AG04449 (cell line): ENCODE measurements at regions of chr10 and their contacts with region 1.

Region 1: GRCh38 chr10:114470956-114471905 is 66.9 kb upstream of the AFAP1L2 start:
- DNase-seq: peak; percentile 9
- H3K4me3 ChIP-seq: no peak overlapping the region
- CTCF ChIP-seq: peak; percentile 81

Region 2: DNA sequence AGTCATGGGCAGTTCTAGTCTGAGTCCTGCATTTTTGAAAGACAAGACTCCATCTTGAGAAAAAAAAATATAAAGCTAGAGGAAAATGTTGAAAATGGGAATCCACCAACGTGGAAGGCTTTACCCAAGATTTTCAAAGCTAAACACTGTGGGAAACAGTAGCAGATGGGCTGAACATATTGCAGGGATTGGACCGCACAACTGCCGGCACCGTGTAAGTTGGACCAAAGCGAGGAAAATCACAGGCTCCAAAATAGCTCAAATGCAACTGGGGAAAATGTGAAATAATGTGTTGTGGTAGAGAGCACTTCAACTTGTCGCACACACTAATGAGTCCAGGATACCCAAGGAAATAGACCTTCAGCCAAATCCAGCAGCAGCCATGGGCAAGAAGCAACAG is 454.0 kb before region 1 on chr10:
- CTCF ChIA-PET with region 1: no interaction called
- POLR2A ChIA-PET with region 1: no interaction called
- DNase-seq: no peak
- H3K4me3 ChIP-seq: no peak overlapping the region
- CTCF ChIP-seq: no peak

Region 3: GRCh38 chr10:114320249-114321116 is 150.7 kb before region 1 on chr10:
- CTCF ChIA-PET with region 1: no interaction called
- POLR2A ChIA-PET with region 1: no interaction called
- DNase-seq: no peak
- H3K4me3 ChIP-seq: no peak overlapping the region
- CTCF ChIP-seq: no peak

Region 4: GRCh38 chr10:114458955-114459354 is 12.3 kb before region 1 on chr10:
- CTCF ChIA-PET with region 1: interaction called, 41 read pairs
- POLR2A ChIA-PET with region 1: no interaction called
- DNase-seq: no peak
- H3K4me3 ChIP-seq: no peak overlapping the region
- CTCF ChIP-seq: no peak

Region 5: GRCh38 chr10:114486938-114487814 is 15.9 kb after region 1 on chr10:
- CTCF ChIA-PET with region 1: interaction called, 41 read pairs
- POLR2A ChIA-PET with region 1: no interaction called
- DNase-seq: no peak
- H3K4me3 ChIP-seq: no peak overlapping the region
- CTCF ChIP-seq: no peak

Region 6: DNA sequence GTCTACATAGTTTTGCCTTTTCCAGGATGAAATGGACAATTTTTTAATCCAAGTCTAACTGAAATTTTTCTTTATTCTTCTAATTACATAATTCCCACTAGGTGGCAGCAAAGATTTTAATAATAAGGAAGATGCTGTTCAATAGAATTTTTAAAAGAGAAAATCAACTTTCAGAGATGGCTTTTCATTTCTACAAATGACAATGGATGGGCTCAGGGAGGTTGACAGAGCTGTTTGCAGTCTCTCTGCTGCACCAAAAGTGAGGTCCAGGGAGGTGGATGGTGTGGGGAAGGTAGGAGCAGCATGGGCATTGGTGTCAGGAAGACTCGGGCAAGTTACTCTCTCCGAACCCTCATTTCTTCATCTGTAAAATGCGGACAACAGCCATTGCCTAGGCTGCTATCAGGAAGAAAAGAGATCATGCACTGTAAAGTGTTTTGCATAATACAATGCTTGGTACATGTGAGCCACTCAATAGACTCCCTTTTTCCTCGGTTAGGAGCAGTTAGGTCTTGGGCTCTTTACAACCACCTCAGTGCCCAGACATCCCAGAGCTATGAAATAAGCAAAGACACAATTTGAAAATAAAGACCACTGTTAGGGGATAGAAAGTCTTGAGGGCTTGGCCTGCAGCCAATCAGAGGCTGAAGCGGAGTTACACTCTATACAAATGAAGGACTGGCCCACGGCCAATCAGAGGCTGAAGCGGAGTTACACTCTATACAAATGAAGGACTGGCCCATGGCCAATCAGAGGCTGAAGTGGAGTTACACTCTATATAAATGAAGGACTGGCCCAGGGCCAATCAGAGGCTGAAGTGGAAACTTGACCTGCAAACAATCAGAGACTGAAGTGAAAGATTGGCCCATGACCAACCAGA is 79.8 kb after region 1 on chr10:
- CTCF ChIA-PET with region 1: interaction called, 59 read pairs
- POLR2A ChIA-PET with region 1: no interaction called
- DNase-seq: no peak
- H3K4me3 ChIP-seq: no peak overlapping the region
- CTCF ChIP-seq: no peak

Region 7: DNA sequence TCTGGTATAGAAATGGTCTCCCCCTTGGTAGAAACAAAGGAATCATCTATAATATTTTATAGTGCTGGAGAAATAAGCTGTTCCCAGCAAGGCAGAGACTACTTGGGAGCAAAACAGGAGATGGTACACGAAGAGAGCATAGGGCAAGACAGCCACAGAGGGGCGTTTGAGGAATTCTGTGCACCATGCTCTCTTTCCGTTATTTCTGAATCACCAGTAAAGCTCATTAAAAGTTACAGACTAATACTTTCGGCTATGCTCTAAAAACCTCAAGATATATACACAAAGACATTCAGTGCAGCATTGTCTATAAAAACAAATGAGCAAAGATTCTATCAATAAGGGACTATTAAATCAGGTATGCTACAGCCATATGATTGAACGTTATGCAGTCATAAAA is 281.9 kb after region 1 on chr10:
- CTCF ChIA-PET with region 1: interaction called, 11 read pairs
- POLR2A ChIA-PET with region 1: no interaction called
- DNase-seq: no peak
- H3K4me3 ChIP-seq: no peak overlapping the region
- CTCF ChIP-seq: peak; percentile 50

Region 8: DNA sequence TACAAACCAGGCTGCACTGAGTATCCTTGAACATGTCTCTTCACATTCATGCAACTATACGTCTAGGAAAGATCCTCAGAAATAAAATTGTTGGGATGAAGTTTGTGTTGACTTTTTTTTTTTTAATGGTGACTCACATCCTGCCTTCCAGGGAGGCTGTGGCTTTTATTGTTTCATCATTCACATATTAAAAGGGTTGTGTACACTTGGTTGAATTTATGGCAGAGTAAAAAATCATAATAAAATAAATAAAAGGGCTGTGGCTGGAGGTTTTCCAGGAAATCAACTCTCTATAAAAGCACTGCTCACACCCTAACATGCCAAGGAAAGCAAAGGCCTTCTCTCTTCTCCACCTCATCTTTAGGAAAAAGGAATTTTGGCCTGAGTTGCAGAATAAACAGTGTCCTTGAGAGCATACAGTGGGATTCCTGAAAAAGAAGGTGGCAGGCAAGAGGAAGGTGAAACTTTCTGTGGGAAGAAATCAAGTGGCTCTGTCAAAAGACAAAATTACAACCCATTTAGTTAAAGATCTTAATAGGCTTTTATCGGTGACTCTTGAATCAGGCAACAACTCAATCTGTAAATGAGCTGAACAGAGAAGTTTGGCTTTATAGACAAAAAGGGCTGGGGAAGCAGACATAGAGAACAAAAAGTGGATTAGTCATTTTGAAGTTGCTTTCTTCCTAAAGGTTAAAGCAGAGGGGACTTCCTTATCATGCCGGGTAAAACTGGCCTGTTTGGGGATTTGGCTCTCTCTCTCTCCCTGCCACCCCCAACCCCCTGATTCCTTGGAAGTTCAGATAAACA is 308.8 kb after region 1 on chr10:
- CTCF ChIA-PET with region 1: interaction called, 11 read pairs
- POLR2A ChIA-PET with region 1: no interaction called
- DNase-seq: peak; percentile 67
- H3K4me3 ChIP-seq: no peak overlapping the region
- CTCF ChIP-seq: no peak

Region 9: GRCh38 chr10:115129752-115130151 is 658.5 kb after region 1 on chr10:
- CTCF ChIA-PET with region 1: interaction called, 16 read pairs
- POLR2A ChIA-PET with region 1: no interaction called
- DNase-seq: no peak
- H3K4me3 ChIP-seq: no peak overlapping the region
- CTCF ChIP-seq: no peak